Posterior vena cava (tissue), 2 donors: ENCODE measurements at regions of chr5 and their contacts with region 1.

Region 1: GRCh38 chr5:56037531-56038010 is 42.8 kb upstream of the IL6ST start:
- DNase-seq: no peak

Region 2: GRCh38 chr5:55162666-55163065 is 874.9 kb before region 1 on chr5:
- intact Hi-C with region 1: no loop called
- DNase-seq: no peak

Region 3: GRCh38 chr5:55850839-55851674 is 186.5 kb before region 1 on chr5 and contains the start of gene IL31RA:
- intact Hi-C with region 1: loop called in 1 of 2 experiments (anchors 5 kb)
- DNase-seq: no peak
- total RNA-seq, gene IL31RA: not detected

Region 4: GRCh38 chr5:56517011-56517416 is 479.4 kb after region 1 on chr5:
- intact Hi-C with region 1: no loop called
- DNase-seq: no peak